Sigmoid colon (tissue), 7 donors: ENCODE measurements at regions of chr5 and their contacts with region 1.

Region 1: GRCh38 chr5:112146323-112147226 is 272.5 kb downstream of the EPB41L4A start:
- DNase-seq: peak; percentile 78
- H3K4me3 ChIP-seq: no peak overlapping the region
- H3K27ac ChIP-seq: peak overlapping the region in 2 of 4 donors; percentile 53 to 56
- H3K4me1 ChIP-seq: peaks cover 0 to 9% (median 4%) of the 10 kb centered on the region in 4 donors
- H3K27me3 ChIP-seq: no peaks in the 10 kb centered on the region
- CTCF ChIP-seq: peak; percentile 78 to 90 (median 82)
- EP300 ChIP-seq: no peak
- POLR2A ChIP-seq: no peak

Region 2: DNA sequence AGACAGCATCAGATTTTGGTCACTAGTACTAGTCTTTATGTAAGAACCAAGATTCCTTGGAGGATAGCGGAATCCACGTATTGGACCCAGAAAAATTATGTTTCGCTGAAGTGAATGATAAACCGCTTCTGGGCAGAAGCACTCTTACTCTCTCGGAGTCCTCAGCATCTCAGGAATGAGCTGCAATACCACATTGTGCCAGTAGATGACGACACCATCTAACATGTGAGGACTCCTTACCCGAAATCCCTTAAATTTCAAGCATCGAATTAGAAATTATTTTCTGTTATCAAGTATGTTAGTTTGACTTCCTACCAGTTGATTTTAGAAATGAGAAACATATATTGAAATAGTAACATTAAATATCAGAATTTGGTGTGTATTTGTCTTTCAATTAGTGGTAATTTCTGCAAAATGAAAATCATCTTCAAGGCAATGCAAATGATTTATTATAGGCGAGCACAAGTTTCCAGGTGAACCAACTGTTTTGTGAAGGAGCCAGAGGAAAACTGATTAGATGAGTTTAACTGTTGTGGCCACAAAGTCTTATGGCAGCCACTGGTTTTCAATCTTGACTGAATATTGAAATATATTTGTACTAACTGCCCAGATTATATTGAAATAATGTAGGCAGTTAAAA is 988.4 kb before region 1 on chr5:
- intact Hi-C with region 1: loop called (anchors 10 kb)
- DNase-seq: peak; percentile 78
- H3K4me3 ChIP-seq: no peak overlapping the region
- H3K27ac ChIP-seq: no peak overlapping the region
- H3K4me1 ChIP-seq: no peaks in the 10 kb centered on the region
- H3K27me3 ChIP-seq: no peaks in the 10 kb centered on the region
- CTCF ChIP-seq: peak; percentile 77 to 99 (median 94)
- EP300 ChIP-seq: no peak
- POLR2A ChIP-seq: no peak

Region 3: GRCh38 chr5:111530298-111530740 is 616.3 kb before region 1 on chr5:
- intact Hi-C with region 1: loop called (anchors 5 kb)
- DNase-seq: peak; percentile 86
- H3K4me3 ChIP-seq: no peak overlapping the region
- H3K27ac ChIP-seq: peak overlapping the region in 1 of 4 donors; percentile 28
- H3K4me1 ChIP-seq: no peaks in the 10 kb centered on the region
- H3K27me3 ChIP-seq: no peaks in the 10 kb centered on the region
- CTCF ChIP-seq: no peak
- EP300 ChIP-seq: no peak
- POLR2A ChIP-seq: no peak

Region 4: GRCh38 chr5:111550279-111551020 is 596.1 kb before region 1 on chr5:
- intact Hi-C with region 1: loop called (anchors 1 kb)
- DNase-seq: peak; percentile 93
- H3K4me3 ChIP-seq: no peak overlapping the region
- H3K27ac ChIP-seq: peak overlapping the region in 3 of 4 donors; percentile 48 to 66 (median 54)
- H3K4me1 ChIP-seq: peaks cover 0 to 20% (median 6%) of the 10 kb centered on the region in 4 donors
- H3K27me3 ChIP-seq: no peaks in the 10 kb centered on the region
- CTCF ChIP-seq: peak; percentile 43 to 70 (median 53)
- EP300 ChIP-seq: no peak
- POLR2A ChIP-seq: no peak

Region 5: GRCh38 chr5:111680737-111681413 is 465.7 kb before region 1 on chr5:
- intact Hi-C with region 1: loop called (anchors 5 kb)
- DNase-seq: peak; percentile 88
- H3K4me3 ChIP-seq: no peak overlapping the region
- H3K27ac ChIP-seq: peak overlapping the region; percentile 5 to 60 (median 42)
- H3K4me1 ChIP-seq: peaks cover 0 to 15% (median 13%) of the 10 kb centered on the region in 4 donors
- H3K27me3 ChIP-seq: no peaks in the 10 kb centered on the region
- CTCF ChIP-seq: no peak
- EP300 ChIP-seq: no peak
- POLR2A ChIP-seq: no peak

Region 6: DNA sequence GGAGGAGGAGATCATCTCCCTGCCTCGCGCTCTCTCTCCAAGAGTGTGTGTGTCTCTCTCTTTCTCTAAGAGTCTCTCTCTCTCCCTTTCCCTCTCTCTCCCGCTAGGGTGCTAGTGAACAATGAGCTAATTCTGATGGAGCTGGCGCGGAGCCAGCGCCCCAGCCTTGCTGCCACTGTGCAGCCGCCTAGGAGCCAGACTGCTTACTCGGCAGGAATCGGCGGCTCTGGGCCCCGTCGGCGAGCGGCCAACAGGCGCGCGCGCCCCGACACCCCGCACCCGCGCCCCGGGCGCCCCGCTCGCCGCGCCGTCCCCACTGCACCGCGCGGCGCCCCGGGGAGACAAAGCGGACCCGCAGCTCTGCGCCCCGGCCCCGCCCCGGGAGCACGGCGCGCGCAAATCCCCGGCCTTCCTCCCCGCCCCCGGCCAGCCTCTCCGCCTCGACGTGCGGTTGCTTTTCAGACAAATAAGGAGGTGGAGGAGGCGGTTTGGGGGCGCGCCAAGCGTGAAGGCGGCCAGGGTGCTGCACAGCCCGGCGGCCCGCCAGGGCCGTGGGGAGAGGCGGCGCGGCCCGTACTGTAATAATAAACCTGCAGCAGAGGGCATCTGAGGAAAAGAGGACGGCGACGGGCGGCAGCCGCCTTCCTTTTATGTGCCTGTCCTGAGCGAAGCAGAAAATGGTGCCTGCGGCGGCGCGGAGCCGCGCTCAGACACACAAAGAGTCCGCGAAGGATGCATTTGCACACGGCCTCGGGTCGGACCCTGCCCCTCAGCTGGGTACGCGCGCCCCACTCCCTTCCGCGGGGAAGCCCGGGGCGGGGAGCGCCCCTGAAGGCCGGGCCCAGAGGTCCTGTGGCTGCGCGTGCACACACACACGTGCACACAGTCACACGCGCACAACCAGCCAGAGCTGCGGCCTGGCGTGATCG is 389.0 kb before region 1 on chr5:
- intact Hi-C with region 1: loop called (anchors 5 kb)
- DNase-seq: peak; percentile 98
- H3K4me3 ChIP-seq: peak overlapping the region; percentile 42 to 70 (median 60)
- H3K27ac ChIP-seq: peak overlapping the region; percentile 85 to 95 (median 94)
- H3K4me1 ChIP-seq: peaks cover 0 to 44% (median 29%) of the 10 kb centered on the region in 4 donors
- H3K27me3 ChIP-seq: no peaks in the 10 kb centered on the region
- CTCF ChIP-seq: peak in 3 of 4 experiments; percentile 51 to 59 (median 55)
- EP300 ChIP-seq: peak in 1 of 4 donors; percentile 43
- POLR2A ChIP-seq: peak in 1 of 2 donors; percentile 47